ENCODE measurements at regions of chr10 and their contacts with region 1.

Region 1: GRCh38 chr10:61284222-61284890 is 168.8 kb downstream of the TMEM26 start:
- DNase-seq: peak in 1 of 2 experiments; percentile 73
- H3K4me3 ChIP-seq: no peak overlapping the region
- H3K4me3 Mint-ChIP-seq: no peak overlapping the region
- H3K27ac Mint-ChIP-seq: no peak overlapping the region
- H3K4me1 ChIP-seq: peaks cover 5% of the 10 kb centered on the region; the same call in 1 of the 2 replicates
- H3K4me1 Mint-ChIP-seq: peaks cover 8% of the 10 kb centered on the region
- H3K27me3 ChIP-seq: no peaks in the 10 kb centered on the region
- H3K27me3 Mint-ChIP-seq: peaks cover 2% of the 10 kb centered on the region
- CTCF ChIP-seq: peak; percentile 84

Region 2: DNA sequence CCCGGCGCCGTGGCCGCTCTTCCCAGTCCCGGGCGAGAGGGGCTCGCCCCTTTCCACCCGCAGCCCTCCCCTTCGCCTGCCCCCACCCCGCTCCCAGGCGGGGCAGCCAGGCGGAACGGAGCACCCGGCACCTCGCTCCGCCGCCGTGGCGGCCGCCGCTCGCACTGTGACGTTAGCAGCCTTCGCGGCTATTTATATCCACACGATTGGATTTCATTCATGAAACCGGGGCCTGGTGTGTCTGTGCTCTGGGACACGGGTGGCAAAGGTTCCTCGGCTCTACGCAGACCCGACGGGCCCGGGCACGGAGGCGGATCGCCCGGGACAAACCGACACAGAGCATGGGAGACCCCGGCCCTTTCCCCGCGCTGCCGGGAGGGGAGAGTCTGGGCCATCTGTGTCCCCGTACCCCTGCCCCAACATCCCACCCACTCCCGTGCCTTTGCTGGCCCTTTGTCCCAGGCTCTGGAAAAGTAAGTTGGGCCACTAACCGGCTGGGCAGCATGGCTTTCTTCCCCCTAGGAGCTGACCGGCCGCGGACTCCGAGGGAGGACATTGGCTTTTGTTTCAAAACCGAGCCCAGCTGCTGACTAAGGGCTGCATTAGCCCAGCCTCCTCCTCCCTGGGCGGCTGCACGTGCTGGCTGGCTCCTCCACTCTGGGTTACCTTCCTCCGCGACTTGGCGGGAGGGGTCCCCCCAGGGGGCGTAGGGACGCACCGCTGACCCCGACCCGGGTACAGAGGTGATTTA is 340.0 kb before region 1 on chr10 and contains the start of gene RHOBTB1:
- CTCF ChIA-PET with region 1: no interaction called
- POLR2A ChIA-PET with region 1: no interaction called
- intact Hi-C with region 1: loop called (anchors 10 kb)
- DNase-seq: peak; percentile 64 to 76
- H3K4me3 ChIP-seq: peak within 1 kb of the TSS; percentile 67
- H3K4me3 Mint-ChIP-seq: peak within 1 kb of the TSS; percentile 82
- H3K27ac Mint-ChIP-seq: peak within 1 kb of the TSS; percentile 80
- H3K4me1 ChIP-seq: peaks cover 6% of the 10 kb centered on the region
- H3K4me1 Mint-ChIP-seq: no peaks in the 10 kb centered on the region
- H3K27me3 ChIP-seq: peaks cover 1% of the 10 kb centered on the region; the same call in 1 of the 2 replicates
- H3K27me3 Mint-ChIP-seq: peaks cover 28% of the 10 kb centered on the region
- CTCF ChIP-seq: no peak
- total RNA-seq, gene RHOBTB1: 18.3 and 19.9 TPM in 2 replicates

Region 3: DNA sequence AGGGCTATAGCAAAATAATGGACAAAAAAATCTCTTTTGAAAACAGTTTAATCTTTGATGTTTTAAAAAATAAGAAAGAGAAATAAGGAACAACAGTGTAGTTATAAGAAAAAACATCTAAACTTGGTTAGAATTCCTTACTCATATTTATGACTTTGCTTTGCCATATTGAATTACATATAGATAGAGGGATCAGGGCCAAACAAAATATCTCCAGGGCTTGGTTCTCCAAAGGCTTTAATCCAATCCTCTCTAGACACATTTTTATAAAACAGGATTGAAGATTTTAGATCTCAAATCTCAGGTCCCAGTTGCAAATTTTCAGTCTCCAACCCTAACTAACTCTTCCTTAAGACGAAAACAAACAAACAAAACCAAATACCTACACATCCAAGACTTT is 267.7 kb before region 1 on chr10:
- CTCF ChIA-PET with region 1: no interaction called
- POLR2A ChIA-PET with region 1: no interaction called
- intact Hi-C with region 1: loop called (anchors 5 kb)
- DNase-seq: no peak
- H3K4me3 ChIP-seq: no peak overlapping the region
- H3K4me3 Mint-ChIP-seq: no peak overlapping the region
- H3K27ac Mint-ChIP-seq: no peak overlapping the region
- H3K4me1 ChIP-seq: 0 out of 2 replicates have a peak, but pooled peaks cover 6% of the 10 kb centered on the region
- H3K4me1 Mint-ChIP-seq: peaks cover 12% of the 10 kb centered on the region
- H3K27me3 ChIP-seq: no peaks in the 10 kb centered on the region; the same call in 1 of the 2 replicates
- H3K27me3 Mint-ChIP-seq: peaks cover 3% of the 10 kb centered on the region
- CTCF ChIP-seq: no peak

Region 4: GRCh38 chr10:61166106-61166888 is 118.1 kb before region 1 on chr10:
- CTCF ChIA-PET with region 1: no interaction called
- POLR2A ChIA-PET with region 1: no interaction called
- intact Hi-C with region 1: loop called (anchors 1 kb)
- DNase-seq: no peak
- H3K4me3 ChIP-seq: no peak overlapping the region
- H3K4me3 Mint-ChIP-seq: no peak overlapping the region
- H3K27ac Mint-ChIP-seq: no peak overlapping the region
- H3K4me1 ChIP-seq: no peaks in the 10 kb centered on the region
- H3K4me1 Mint-ChIP-seq: no peaks in the 10 kb centered on the region
- H3K27me3 ChIP-seq: no peaks in the 10 kb centered on the region
- H3K27me3 Mint-ChIP-seq: peaks cover 9% of the 10 kb centered on the region
- CTCF ChIP-seq: no peak

Measured in Caco-2 (cell line).